ENCODE measurements at regions of chr3 and their contacts with region 1.

Region 1: GRCh38 chr3:129249276-129250065 is at the start of gene COPG1:
- DNase-seq: peak; percentile 95
- H3K4me3 ChIP-seq: peak within 1 kb of the TSS; percentile 86 to 95
- H3K27ac ChIP-seq: peak within 1 kb of the TSS; percentile 66 to 88
- H3K4me1 ChIP-seq: peaks cover 6 to 13% of the 10 kb centered on the region in 2 experiments; a peak in 2 of 4 replicates
- H3K27me3 ChIP-seq: no peaks in the 10 kb centered on the region
- CTCF ChIP-seq: no peak
- EP300 ChIP-seq: no peak
- RAD21 ChIP-seq: no peak
- polyA plus RNA-seq, gene COPG1: 111 and 114 TPM in 2 replicates

Region 2: GRCh38 chr3:129003578-129004160 is 245.8 kb before region 1 on chr3:
- CTCF ChIA-PET with region 1: interaction called, 14 read pairs
- POLR2A ChIA-PET with region 1: no interaction called
- DNase-seq: peak; percentile 80
- H3K4me3 ChIP-seq: peak overlapping the region in 1 of 2 experiments; percentile 27; a peak in 1 of 4 replicates
- H3K27ac ChIP-seq: no peak overlapping the region
- H3K4me1 ChIP-seq: peaks cover 0 to 2% of the 10 kb centered on the region in 2 experiments; a peak in 1 of 4 replicates
- H3K27me3 ChIP-seq: peaks cover 49% of the 10 kb centered on the region
- CTCF ChIP-seq: no peak
- EP300 ChIP-seq: no peak
- RAD21 ChIP-seq: peak; percentile 28; the same call in 1 of the 2 replicates

Region 3: GRCh38 chr3:129058441-129059200 is 190.8 kb before region 1 on chr3:
- CTCF ChIA-PET with region 1: interaction called, 43 read pairs
- POLR2A ChIA-PET with region 1: no interaction called
- DNase-seq: no peak
- H3K4me3 ChIP-seq: no peak overlapping the region
- H3K27ac ChIP-seq: no peak overlapping the region
- H3K4me1 ChIP-seq: peaks cover 0 to 29% of the 10 kb centered on the region in 2 experiments; a peak in 1 of 4 replicates
- H3K27me3 ChIP-seq: 0 out of 2 replicates have a peak, but pooled peaks cover 16% of the 10 kb centered on the region
- CTCF ChIP-seq: no peak
- EP300 ChIP-seq: no peak
- RAD21 ChIP-seq: no peak

Region 4: DNA sequence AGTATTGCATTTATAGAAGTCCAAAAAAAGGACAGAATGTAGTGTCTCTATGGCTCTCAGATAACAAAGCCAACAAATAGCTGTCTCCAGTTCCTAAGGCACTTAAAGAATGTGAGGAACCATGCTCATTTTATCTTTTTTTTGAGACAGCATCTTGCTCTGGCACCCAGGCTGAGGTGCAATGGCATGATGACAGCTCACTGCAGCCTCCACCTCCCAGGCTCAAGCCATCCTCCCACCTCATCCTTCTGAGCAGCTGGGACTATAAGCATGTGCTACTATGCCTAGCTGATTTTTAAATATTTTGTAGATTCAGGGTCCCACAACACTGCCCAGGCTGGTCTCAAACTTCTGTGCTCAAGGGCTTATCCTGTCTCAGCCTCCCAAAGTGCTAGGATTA is 104.7 kb before region 1 on chr3:
- CTCF ChIA-PET with region 1: interaction called, 11 read pairs
- POLR2A ChIA-PET with region 1: no interaction called
- DNase-seq: no peak
- H3K4me3 ChIP-seq: no peak overlapping the region
- H3K27ac ChIP-seq: no peak overlapping the region
- H3K4me1 ChIP-seq: no peaks in the 10 kb centered on the region
- H3K27me3 ChIP-seq: no peaks in the 10 kb centered on the region
- CTCF ChIP-seq: no peak
- EP300 ChIP-seq: no peak
- RAD21 ChIP-seq: no peak

Region 5: DNA sequence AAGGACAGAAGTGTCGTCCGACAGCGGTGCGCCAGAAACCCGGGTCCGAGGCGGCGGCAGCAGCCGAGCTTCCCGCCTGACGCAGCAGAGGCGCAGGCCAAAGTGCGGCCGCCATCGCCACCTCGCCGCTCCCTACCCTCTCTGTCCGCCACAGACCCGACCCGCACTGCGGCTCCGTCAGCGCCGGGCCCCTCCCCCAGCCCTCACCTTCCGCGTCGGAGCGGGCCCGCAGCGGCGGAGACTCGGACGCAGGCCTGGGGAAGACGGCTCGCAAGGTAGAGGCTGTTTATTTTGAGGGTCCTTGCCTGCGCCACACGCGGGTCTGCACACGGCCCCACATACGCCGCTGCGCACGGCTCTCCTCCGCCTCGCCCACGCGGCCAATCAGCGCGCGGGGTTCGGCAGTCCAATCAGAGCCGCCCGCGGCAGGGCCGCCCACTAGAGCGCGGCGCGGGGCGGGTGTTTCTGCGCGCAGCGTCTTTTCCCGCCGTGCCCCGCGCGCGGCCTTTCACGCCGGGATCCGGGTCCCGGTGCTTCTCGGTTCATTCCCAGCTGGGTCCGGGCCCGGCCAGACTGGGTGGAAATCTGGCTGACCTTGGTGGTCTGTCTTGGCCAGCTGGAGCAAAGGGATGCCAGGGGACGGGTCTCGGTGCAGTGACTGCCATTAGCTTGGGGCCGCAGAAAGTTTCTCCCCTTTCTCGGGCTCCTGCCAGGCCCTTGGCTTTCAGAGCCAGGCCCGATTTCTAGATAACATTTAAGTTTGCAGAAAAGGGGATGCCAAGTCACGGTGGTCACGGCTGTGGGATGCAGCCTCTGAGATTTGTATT is 65.7 kb before region 1 on chr3 and contains the start of gene CNBP:
- CTCF ChIA-PET with region 1: interaction called, 17 read pairs
- POLR2A ChIA-PET with region 1: interaction called, 4 read pairs
- DNase-seq: peak; percentile 98
- H3K4me3 ChIP-seq: peak within 1 kb of the TSS; percentile 83 to 87
- H3K27ac ChIP-seq: peak within 1 kb of the TSS; percentile 89 to 92
- H3K4me1 ChIP-seq: peaks cover 6 to 20% of the 10 kb centered on the region in 2 experiments; a peak in 3 of 4 replicates
- H3K27me3 ChIP-seq: no peaks in the 10 kb centered on the region
- CTCF ChIP-seq: no peak
- EP300 ChIP-seq: peak in 1 of 2 experiments; percentile 20; a peak in 1 of 4 replicates
- RAD21 ChIP-seq: no peak
- polyA plus RNA-seq, gene CNBP: 240 and 279 TPM in 2 replicates

Region 6: DNA sequence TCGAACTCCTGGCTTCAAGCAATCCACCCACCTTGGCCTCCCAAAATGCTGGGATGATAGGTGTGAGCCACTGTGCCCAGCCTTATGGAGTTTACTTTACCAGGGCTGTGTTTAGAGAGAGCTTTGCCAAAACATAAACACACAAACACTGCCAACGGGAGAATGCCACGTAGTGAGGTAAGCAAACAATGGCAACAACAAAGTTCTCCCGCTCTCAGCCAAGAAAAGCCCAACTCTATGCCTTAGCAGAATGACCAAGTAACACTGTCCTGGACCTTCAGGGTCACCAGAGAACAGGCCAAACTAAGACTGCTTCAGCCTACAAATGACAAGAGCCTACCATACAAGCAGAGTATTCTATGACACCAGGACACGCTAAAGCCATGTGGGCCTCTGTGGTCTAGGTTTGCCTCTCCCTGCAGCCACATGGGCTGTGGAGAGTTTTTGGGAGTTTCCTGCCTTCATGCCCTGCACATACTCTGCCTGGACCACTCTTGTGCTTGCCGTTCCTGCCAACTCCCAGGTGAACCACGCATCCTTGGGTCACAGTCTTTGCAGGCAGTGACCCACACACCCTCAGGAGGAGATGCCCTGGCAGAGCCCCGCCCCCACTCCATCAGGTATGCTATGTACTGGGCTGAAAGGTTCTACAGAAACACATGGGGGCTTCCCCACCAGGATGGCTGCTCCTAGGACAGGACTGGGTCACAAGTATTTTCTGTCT is 44.2 kb before region 1 on chr3:
- CTCF ChIA-PET with region 1: interaction called, 11 read pairs
- POLR2A ChIA-PET with region 1: no interaction called
- DNase-seq: no peak
- H3K4me3 ChIP-seq: no peak overlapping the region
- H3K27ac ChIP-seq: no peak overlapping the region
- H3K4me1 ChIP-seq: no peaks in the 10 kb centered on the region
- H3K27me3 ChIP-seq: no peaks in the 10 kb centered on the region
- CTCF ChIP-seq: no peak
- EP300 ChIP-seq: no peak
- RAD21 ChIP-seq: no peak

Region 7: DNA sequence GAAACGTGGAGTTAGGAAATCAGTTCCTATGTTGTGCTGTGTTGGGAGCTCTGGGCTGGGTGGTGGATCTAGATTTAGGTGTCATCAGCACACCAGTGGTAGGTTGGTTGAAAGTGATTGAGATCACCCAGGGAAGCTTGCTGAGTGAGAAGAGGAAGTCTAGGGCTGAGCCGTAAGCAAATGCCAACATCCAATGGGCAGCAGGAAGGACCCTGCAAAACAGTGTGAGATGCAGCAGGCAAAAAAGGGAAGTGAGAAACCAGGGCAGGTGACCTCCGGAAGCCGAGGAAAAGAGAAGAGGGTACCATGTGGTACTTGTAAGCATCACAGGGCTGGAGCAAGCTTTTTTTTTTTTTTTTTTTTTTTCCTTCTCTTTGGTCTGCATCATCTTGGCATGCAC is 15.9 kb before region 1 on chr3:
- CTCF ChIA-PET with region 1: interaction called, 49 read pairs
- POLR2A ChIA-PET with region 1: no interaction called
- DNase-seq: no peak
- H3K4me3 ChIP-seq: no peak overlapping the region
- H3K27ac ChIP-seq: no peak overlapping the region
- H3K4me1 ChIP-seq: peaks cover 0 to 14% of the 10 kb centered on the region in 2 experiments; a peak in 1 of 4 replicates
- H3K27me3 ChIP-seq: no peaks in the 10 kb centered on the region
- CTCF ChIP-seq: no peak
- EP300 ChIP-seq: no peak
- RAD21 ChIP-seq: no peak